ENCODE measurements at regions of chr14 and their contacts with region 1.

Region 1: DNA sequence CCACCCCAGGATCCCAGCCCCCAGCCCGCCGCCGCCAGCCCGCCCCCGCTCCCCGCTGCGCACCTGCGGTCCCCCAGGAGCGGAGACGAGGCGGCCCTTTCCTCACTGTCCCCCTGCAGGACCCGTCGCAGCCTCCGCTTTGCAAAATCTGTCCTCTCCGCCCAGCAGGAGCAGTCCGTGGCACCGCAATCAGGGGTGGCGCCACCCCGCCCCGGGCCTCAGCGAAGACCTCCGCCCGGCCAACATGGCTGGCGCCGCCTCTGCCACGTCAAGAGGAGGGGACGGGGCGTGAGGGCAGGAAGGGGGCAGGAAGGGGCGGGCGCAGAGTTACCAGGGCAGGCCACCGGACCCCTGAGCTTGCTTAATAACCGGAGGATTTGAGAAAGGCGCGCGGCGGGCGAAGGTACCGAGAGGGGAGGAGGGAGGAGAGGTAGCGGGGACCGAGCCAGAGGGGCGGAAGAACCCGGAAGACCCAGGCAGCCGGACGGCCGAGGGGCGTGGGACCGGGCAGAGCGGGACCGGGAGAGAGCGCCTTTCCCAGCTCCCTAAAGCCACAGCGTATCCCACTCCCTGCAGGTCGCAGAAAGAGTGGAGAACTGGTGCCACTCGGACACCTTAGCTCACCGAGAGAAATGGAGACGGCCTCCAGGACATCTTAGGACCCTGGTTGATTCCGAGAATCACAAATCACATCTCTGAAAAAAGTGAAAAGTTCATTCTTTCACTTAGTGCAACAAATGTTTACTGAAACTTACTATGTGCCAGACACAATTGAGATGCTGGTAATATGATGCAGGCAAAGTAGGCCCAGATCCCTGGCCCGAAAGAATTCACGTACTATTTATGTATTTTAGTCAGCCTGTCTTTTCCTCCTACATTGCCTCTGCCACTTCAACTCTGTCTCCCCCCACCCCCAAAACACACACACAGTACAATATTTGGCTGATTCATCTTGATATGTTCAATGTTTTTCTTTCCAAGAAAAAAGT is at the start of gene SEC23A:
- DNase-seq: peak; percentile 82
- H3K4me3 Mint-ChIP-seq: peak within 1 kb of the TSS; percentile 98
- H3K27ac Mint-ChIP-seq: peak within 1 kb of the TSS; percentile 98
- H3K4me1 Mint-ChIP-seq: peaks cover 29% of the 10 kb centered on the region
- H3K27me3 Mint-ChIP-seq: no peaks in the 10 kb centered on the region
- total RNA-seq, gene SEC23A: 76.4 and 86.7 TPM in 2 replicates

Region 2: GRCh38 chr14:38016497-38016896 is 1086.8 kb before region 1 on chr14:
- intact Hi-C with region 1: no loop called
- DNase-seq: no peak
- H3K4me3 Mint-ChIP-seq: no peak overlapping the region
- H3K27ac Mint-ChIP-seq: no peak overlapping the region
- H3K4me1 Mint-ChIP-seq: no peaks in the 10 kb centered on the region
- H3K27me3 Mint-ChIP-seq: no peaks in the 10 kb centered on the region

Region 3: DNA sequence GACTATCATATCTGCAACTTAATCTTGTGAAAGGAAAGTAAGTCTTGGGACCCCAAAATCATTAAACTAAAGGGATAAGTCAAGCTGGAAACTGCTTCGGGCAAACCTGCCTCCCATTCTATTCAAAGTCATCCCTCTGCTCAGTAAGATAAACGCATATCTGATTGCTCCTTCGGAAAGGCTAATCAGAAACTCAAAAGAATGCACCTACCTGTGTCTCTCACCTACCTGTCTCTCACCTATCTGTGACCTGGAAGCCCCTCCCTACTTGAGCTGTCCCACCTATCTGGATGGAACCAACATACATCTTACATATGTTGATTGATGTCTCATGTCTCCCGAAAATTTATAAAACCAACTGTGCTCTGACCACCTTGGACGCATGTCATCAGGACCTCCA is 20.1 kb before region 1 on chr14:
- intact Hi-C with region 1: no loop called
- DNase-seq: no peak
- H3K4me3 Mint-ChIP-seq: no peak overlapping the region
- H3K27ac Mint-ChIP-seq: no peak overlapping the region
- H3K4me1 Mint-ChIP-seq: peaks cover 4% of the 10 kb centered on the region
- H3K27me3 Mint-ChIP-seq: no peaks in the 10 kb centered on the region

Region 4: GRCh38 chr14:39138440-39138839 is 35.2 kb after region 1 on chr14:
- intact Hi-C with region 1: no loop called
- DNase-seq: no peak
- H3K4me3 Mint-ChIP-seq: no peak overlapping the region
- H3K27ac Mint-ChIP-seq: no peak overlapping the region
- H3K4me1 Mint-ChIP-seq: peaks cover 2% of the 10 kb centered on the region
- H3K27me3 Mint-ChIP-seq: no peaks in the 10 kb centered on the region

Region 5: DNA sequence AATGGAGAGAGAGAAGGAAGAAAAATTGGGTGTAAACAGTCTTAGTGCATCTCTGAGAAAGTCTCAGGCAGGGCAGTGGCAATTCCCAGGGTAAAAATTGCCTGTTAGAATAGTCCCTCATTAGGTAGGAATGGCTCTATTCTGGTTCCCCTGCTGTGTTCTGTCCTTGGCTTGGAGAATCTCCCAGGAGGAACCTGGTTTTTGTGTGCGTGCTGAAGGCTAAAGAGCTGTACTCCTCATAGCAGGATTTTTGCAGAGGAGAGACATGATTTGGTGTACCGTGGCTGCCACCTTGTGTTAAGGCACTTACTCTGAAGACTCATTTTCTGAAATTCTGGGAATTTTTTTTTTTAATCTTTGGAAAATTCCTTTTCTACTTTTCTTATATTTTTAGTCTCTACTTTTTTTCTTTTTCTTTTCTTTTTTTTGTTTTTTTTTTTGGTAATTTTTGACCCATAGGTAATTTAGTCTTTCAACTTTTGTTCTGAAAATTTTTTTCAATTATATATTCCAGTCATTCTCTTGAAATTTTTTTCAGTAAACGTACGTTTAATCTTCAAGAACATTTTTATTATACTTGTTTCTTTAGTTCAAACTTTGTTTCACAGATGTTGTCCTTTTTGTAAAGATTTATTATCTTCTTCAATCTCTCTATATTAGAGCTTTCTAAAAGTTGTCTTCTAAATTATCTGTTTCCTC is 265.1 kb after region 1 on chr14:
- intact Hi-C with region 1: loop called (anchors 1 kb)
- DNase-seq: no peak
- H3K4me3 Mint-ChIP-seq: no peak overlapping the region
- H3K27ac Mint-ChIP-seq: no peak overlapping the region
- H3K4me1 Mint-ChIP-seq: peaks cover 5% of the 10 kb centered on the region
- H3K27me3 Mint-ChIP-seq: no peaks in the 10 kb centered on the region

Measured in activated T-helper 2 cell treated with anti-CD3 and anti-CD28 coated beads, Interferon-gamma antibody, Interleukin-2, Interleukin-4, amounts not matched to agents 10 μg/mL and 5 μg/mL and 100 μg/mL, durations not matched to agents 14 hours and 24 hours and 36 hours (primary cell).